ENCODE measurements at regions of chr3 and their contacts with region 1.

Region 1: DNA sequence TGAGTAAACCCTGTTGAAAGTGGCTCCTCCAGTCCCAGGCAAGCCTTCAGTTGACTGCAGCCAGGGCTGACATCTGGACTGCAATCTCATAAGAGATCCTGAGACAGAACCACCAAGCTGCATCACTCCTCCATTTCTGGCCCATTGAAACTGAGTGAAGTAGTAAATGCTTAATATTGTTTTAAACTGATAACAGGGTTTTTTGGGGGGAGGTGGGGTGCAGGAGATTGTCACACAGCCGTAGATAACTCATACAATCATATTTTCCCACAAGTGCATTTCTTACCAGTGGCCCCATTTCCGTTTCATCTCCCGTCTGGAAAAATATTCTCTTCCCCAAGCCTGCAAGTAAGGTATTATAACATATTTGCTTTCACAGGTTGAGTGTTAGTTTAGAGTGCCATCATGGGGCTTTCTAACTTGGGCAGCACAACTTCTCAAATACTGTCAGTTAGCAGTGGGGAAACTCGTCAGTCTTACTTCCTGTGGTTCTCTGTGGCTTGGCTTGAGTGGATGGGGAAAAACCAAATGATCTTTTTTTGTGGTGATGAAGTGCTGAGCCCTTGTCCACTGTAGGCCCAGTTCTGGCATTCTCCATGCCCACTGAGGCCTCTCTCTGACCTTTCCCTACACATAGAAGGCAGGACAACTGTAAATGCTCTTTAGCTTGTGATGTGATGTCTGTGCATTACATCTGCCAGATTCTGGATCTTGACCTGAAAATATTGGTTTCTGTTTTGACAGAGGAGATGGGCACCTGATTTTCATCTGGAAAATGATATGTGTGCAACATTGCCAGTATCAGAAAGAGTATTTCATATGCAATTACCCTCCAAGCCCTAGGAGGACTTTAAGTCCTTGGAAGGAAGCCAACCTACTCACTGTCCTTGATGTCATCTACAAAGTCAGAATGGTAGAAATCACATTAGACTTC is 90.1 kb upstream of the BHLHE40 start:
- DNase-seq: no peak
- ATAC-seq: no peak
- H3K4me3 ChIP-seq: no peak overlapping the region
- H3K27ac ChIP-seq: no peak overlapping the region
- H3K4me1 ChIP-seq: peaks cover 0 to 5% of the 10 kb centered on the region in 2 donors
- H3K27me3 ChIP-seq: no peaks in the 10 kb centered on the region
- CTCF ChIP-seq: no peak
- POLR2A ChIP-seq: no peak

Region 2: DNA sequence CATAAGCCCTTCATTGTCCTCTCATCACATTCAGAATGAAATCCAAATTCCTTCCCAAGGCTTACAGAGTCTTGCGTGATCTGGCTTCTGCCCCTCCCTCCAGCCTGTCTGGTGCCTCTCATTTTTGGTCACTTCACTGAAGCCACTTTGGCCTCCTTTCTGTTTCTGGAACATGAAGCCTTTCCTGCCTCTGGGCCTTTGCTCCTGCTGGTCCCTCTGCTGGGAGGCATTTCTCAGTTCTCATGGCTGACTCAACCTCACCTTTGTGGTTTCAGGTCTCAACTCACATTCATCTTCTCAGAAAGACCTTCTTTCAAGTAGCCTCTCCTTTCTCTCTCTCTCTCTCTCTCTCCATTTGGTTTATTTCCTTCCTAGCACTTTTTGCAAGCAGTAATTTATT is 46.2 kb after region 1 on chr3:
- in situ Hi-C with region 1: no loop called
- intact Hi-C with region 1: loop called (anchors 10 kb)
- DNase-seq: no peak
- ATAC-seq: no peak
- H3K4me3 ChIP-seq: no peak overlapping the region
- H3K27ac ChIP-seq: no peak overlapping the region
- H3K4me1 ChIP-seq: no peaks in the 10 kb centered on the region
- H3K27me3 ChIP-seq: no peaks in the 10 kb centered on the region
- CTCF ChIP-seq: no peak
- POLR2A ChIP-seq: no peak

Region 3: DNA sequence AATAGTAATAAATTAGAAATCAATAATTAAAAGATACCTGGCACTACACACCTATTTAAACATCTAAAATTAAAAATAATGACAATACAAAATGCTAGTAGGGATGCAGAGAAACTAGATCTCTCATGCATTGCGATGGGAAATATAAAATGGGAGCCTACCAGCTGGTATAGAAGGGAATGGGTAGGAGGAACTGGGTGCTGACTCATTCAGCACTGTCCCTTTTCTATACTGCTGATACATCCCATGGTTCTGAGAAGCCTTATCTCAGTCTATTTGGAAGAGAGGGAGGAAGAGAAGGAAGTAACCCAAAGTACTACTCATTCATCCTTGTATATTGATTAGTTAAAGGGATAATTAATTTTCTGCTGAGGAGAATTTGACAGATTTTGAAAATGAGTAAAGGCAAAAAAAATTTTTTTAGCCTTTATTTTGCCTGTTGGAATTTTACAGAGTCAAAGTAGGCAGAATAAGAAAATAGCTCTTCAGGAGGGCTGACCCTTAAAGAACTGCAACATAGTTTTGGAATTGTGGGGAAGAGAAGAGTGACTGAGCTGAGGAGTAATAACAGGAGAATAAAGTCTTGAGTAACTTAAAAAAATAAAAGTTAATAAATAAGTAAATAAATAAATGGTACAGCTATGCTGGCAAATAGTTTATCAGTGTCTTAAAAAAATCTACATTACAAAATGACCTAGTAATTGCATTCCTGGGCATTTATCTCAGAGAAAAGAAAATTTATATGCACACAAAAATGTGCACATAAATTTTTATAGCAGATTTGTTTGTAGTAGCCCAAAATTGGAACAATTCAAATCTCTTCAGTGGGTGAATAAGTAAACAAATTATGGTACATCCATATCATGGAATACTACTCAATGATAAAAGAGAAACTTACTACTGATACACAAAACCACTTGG is 74.7 kb after region 1 on chr3:
- in situ Hi-C with region 1: no loop called
- intact Hi-C with region 1: loop called (anchors 5 kb)
- DNase-seq: no peak
- ATAC-seq: no peak
- H3K4me3 ChIP-seq: no peak overlapping the region
- H3K27ac ChIP-seq: no peak overlapping the region
- H3K4me1 ChIP-seq: no peaks in the 10 kb centered on the region
- H3K27me3 ChIP-seq: no peaks in the 10 kb centered on the region
- CTCF ChIP-seq: no peak
- POLR2A ChIP-seq: no peak